Activated CD8-positive, alpha-beta T cell treated with anti-CD3 and anti-CD28 coated beads for 36 hours (primary cell): ENCODE measurements at regions of chr7 and their contacts with region 1.

Region 1: DNA sequence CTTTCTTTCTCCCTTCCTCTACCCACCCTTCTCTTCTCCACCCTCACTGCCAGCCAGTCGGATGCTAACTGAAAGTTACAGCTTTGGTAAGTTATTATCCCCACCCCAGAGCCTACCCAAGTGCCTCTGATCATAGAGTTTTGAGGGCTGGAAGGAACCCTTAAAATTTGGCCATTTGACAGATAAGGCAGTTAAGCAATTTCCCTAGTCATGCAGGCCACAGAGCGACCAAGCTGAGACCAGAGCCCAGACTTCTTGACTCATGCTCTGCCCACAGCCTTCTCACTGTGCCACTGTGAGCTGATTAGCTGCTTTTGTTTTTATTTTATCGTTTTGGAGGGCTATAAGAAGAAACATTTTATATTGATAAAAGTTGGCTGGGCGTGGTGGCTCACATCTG is 17.2 kb downstream of the SAP25 start:
- DNase-seq: no peak
- ATAC-seq: no peak
- H3K4me3 Mint-ChIP-seq: no peak overlapping the region
- H3K27ac Mint-ChIP-seq: peak overlapping the region; percentile 82
- H3K4me1 Mint-ChIP-seq: peaks cover 16% of the 10 kb centered on the region
- H3K27me3 Mint-ChIP-seq: no peaks in the 10 kb centered on the region
- CTCF ChIP-seq: no peak

Region 2: DNA sequence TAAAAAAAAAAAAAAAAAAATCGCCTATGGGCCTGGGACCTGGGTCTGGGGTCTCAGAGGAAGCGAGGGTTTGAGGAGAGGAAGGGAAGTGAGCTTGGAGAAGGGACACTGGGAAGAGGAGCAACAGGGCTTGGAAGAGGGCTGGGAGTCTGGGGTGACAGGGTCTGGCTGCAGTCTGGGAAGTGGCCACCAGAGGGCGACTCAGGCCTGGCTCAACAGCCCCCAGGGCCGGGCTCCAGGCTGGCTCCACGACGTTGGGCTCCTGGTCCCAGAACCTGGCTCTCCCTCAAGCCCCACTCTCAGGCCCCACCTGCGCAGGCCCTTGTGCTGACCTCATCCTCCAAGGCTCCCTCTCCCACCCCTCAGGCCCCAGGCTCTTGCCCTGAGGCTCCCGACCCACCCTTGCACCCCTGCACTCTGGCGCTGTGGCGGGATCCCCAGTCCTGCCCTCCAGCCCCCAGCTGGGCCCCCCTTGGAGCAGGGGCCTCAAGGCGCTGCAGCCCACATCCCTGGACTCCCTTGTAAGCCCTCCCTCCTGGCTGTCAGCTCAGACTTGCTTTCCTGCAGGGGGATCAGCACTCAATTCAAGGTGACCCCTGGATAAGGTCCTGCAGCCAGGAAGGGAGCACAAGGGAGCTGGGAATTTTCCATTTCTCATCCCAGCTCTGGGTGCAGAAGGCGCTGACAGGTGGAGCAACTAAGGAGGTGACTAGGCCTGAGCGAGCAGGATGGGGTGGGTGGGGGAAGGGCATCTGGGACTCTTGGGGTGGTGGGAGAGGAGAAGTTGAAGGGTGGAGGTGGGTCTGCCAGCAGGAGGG is 87.1 kb before region 1 on chr7:
- CTCF ChIA-PET with region 1: interaction called, 75 read pairs
- POLR2A ChIA-PET with region 1: interaction called, 3 read pairs
- intact Hi-C with region 1: no loop called
- DNase-seq: peak; percentile 87
- ATAC-seq: peak; percentile 89
- H3K4me3 Mint-ChIP-seq: no peak overlapping the region
- H3K27ac Mint-ChIP-seq: peak overlapping the region; percentile 57
- H3K4me1 Mint-ChIP-seq: peaks cover 33% of the 10 kb centered on the region
- H3K27me3 Mint-ChIP-seq: no peaks in the 10 kb centered on the region
- CTCF ChIP-seq: peak; percentile 82

Region 3: DNA sequence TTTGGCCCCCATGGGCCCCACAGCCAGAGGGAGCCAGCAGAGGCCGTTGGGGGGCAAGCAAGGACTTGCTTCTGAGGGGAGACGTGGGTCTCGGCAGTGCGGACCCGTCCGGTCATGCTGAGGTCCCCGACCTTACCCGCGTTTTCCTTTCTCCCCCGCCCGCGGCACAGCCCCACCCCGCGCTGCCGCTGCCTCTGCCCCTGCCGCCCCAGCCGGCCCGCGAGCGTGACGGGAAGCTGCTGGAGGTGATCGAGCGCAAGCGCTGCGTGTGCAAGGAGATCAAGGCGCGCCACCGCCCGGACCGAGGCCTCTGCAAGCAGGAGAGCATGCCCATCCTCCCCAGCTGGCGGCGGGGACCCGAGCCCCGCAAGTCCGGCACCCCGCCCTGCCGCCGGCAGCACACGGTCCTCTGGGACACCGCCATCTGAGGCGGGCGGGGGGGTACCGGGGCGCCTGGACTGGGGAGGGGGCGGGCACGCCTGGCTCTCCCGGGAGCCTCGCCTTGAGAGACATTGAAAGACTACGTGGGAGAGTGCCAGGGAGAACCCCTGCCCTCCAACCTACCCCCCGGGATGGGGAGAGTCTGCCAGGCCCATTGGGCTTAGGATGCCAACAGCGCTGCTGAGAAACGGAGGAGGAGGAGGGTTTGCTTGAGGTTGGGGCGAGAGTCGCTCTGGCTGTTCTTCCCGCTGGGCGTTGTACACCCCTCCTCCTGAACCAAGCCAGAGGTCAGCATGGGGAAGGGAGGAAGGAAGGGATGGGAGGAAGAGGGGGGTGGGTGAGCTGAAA is 62.9 kb before region 1 on chr7:
- CTCF ChIA-PET with region 1: interaction called, 11 read pairs
- POLR2A ChIA-PET with region 1: interaction called, 7 read pairs
- intact Hi-C with region 1: no loop called
- DNase-seq: peak; percentile 76
- ATAC-seq: peak; percentile 93
- H3K4me3 Mint-ChIP-seq: peak overlapping the region; percentile 61
- H3K27ac Mint-ChIP-seq: no peak overlapping the region
- H3K4me1 Mint-ChIP-seq: peaks cover 8% of the 10 kb centered on the region
- H3K27me3 Mint-ChIP-seq: no peaks in the 10 kb centered on the region
- CTCF ChIP-seq: no peak

Region 4: DNA sequence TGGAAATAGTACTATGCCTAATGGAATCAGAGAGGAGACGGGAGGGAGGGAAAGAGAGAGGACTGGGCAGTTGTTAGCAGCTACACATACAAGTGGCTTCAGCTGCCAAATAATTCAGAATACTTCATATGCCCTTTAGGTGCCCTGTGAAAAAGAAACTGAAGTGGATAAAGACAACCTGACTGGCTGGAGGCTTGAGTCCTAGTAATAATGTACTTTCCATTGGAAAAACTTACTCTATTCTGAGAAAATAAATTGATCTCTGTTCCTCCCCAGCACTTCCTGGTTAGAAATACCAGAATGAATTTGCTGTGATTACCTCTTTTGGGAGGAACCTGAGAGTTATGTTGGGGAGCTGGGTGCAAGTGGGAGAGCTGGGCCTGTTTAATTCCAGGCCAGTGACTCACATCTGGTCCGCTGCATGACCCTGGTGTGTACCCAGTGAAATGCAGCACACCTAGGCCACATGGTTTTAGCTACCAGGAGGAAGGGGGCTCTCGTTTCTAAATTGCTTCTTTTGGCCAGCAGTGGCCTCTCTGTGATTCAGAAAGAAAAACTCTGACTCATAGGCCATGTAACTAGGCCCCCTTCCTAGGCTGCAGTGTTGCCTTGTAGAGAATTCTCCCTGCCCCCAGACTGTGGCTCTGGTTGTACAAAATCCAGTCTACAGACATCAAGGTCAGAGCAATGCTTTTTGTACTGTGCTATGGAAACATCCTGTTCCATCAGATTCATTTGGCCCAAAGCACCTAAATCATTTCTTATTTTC is 11.0 kb before region 1 on chr7:
- CTCF ChIA-PET with region 1: interaction called, 92 read pairs
- POLR2A ChIA-PET with region 1: interaction called, 4 read pairs
- intact Hi-C with region 1: no loop called
- DNase-seq: peak; percentile 87
- ATAC-seq: peak; percentile 79
- H3K4me3 Mint-ChIP-seq: peak overlapping the region; percentile 91
- H3K27ac Mint-ChIP-seq: peak overlapping the region; percentile 99
- H3K4me1 Mint-ChIP-seq: peaks cover 90% of the 10 kb centered on the region
- H3K27me3 Mint-ChIP-seq: no peaks in the 10 kb centered on the region
- CTCF ChIP-seq: no peak

Region 5: DNA sequence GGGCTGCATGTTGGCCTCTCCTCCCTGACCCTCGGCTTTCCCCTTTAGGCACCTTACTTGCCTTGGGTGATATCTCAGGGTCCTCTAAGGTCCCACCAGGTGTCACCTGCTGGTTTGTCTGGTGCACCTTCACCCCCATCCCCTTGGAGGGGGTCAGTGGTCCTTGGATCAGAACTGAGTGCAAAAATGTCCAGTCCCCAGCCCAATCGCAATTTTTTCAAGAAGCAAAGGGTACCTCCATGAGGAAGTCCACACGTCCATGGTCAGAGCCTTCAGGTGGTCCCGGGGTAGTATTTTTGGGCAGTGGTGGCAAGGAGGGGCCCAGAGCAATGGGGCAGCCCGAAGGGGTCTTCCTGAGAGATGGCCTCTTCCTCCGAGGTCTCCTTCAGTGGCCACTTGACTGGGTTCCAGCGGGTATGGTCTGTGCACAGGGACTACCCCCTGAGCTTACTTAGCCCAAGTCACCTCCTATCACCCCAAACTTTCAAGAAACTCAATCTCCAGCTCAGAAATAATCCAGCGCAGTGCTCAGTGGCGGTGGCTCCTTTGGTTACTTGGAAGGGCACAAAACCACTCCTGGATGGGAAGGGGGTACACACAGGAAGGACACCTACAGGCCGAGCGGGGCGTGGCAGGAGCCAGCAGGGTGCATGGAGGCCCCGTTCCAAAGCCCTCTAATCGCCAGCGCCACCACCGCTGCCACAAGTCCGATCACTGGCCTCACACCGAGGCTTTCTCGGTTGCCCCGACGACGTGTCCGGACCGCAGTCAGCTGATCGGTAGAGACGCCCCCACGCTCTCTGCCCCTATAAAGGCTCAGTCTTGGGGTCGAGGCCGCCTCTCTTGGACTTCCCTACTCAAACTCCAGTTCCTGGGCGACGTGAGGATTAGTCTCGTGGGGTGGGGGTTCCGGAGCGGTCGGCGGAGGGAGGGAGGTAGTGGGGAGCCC is 12.6 kb after region 1 on chr7:
- CTCF ChIA-PET with region 1: interaction called, 30 read pairs
- POLR2A ChIA-PET with region 1: interaction called, 5 read pairs
- intact Hi-C with region 1: no loop called
- DNase-seq: peak; percentile 73
- ATAC-seq: peak; percentile 50
- H3K4me3 Mint-ChIP-seq: peak overlapping the region; percentile 27
- H3K27ac Mint-ChIP-seq: peak overlapping the region; percentile 8
- H3K4me1 Mint-ChIP-seq: peaks cover 42% of the 10 kb centered on the region
- H3K27me3 Mint-ChIP-seq: no peaks in the 10 kb centered on the region
- CTCF ChIP-seq: peak; percentile 44

Region 6: GRCh38 chr7:100649826-100650547 is 93.4 kb after region 1 on chr7:
- CTCF ChIA-PET with region 1: no interaction called
- POLR2A ChIA-PET with region 1: no interaction called
- intact Hi-C with region 1: no loop called
- DNase-seq: no peak
- ATAC-seq: no peak
- H3K4me3 Mint-ChIP-seq: no peak overlapping the region
- H3K27ac Mint-ChIP-seq: no peak overlapping the region
- H3K4me1 Mint-ChIP-seq: peaks cover 4% of the 10 kb centered on the region
- H3K27me3 Mint-ChIP-seq: peaks cover 16% of the 10 kb centered on the region
- CTCF ChIP-seq: no peak

Region 7: GRCh38 chr7:100731937-100732636 is 175.5 kb after region 1 on chr7:
- CTCF ChIA-PET with region 1: no interaction called
- POLR2A ChIA-PET with region 1: no interaction called
- intact Hi-C with region 1: no loop called
- DNase-seq: no peak
- ATAC-seq: no peak
- H3K4me3 Mint-ChIP-seq: no peak overlapping the region
- H3K27ac Mint-ChIP-seq: no peak overlapping the region
- H3K4me1 Mint-ChIP-seq: no peaks in the 10 kb centered on the region
- H3K27me3 Mint-ChIP-seq: peaks cover 5% of the 10 kb centered on the region
- CTCF ChIP-seq: no peak